Heart right ventricle (tissue), 16 donors: ENCODE measurements at regions of chr5 and their contacts with region 1.

Region 1: GRCh38 chr5:112551419-112552032 is 132.4 kb upstream of the EPB41L4A start:
- DNase-seq: peak in 1 of 2 donors; percentile 64
- ATAC-seq: peak in 7 of 8 donors; percentile 43 to 67 (median 60)
- H3K4me3 ChIP-seq: no peak overlapping the region
- H3K27ac ChIP-seq: no peak overlapping the region
- H3K4me1 ChIP-seq: peaks cover 0 to 32% (median 12%) of the 10 kb centered on the region in 9 donors
- H3K27me3 ChIP-seq: no peaks in the 10 kb centered on the region
- CTCF ChIP-seq: peak; percentile 66 to 89 (median 75)

Region 2: GRCh38 chr5:112594095-112594850 is 42.7 kb after region 1 on chr5:
- intact Hi-C with region 1: no loop called
- DNase-seq: no peak
- ATAC-seq: no peak
- H3K4me3 ChIP-seq: no peak overlapping the region
- H3K27ac ChIP-seq: no peak overlapping the region
- H3K4me1 ChIP-seq: peaks cover 0 to 8% (median 0%) of the 10 kb centered on the region in 9 donors
- H3K27me3 ChIP-seq: no peaks in the 10 kb centered on the region
- CTCF ChIP-seq: no peak

Region 3: DNA sequence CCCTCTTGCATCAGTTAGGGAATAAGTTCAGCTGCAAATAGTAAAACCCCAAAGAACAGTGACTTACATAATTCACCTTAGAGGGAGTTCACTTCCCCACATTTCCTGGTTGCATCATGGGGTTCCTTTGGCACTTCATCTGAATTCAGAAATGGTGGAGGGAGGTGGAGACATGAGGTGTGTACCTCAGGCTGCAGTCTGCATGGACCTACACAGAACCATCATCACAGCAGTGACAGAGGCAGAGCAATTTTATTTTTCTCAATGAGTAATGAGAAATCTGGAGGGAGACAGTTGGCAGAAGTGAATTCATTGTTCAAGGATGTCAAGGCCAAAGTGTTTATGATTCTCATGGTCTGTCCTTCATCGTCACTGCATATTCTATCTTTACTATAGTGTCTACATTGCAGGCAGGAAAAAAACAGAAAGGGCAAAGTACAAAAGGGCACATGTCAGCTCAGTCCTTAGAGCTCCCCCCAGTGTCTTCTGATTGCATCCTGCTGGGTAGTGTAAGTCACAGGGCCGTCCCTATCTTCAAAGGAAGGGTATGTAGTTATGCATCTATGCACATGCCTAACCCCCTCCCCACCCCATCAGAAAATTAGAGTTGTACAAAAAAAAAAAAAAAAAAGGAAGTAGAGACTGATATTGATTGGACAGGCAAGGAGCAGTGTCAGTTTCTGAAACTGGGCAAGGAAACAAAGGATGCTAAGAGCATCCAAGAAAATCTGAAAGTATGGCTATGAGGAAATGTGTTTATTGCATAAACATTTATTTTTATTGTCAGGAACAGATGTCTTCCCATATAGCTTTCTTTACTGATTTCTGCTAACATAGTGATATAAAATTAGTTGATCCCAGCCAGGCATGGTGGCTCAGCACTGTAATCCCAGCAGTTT is 53.5 kb after region 1 on chr5:
- intact Hi-C with region 1: loop called in 1 of 10 experiments (anchors 5 kb)
- DNase-seq: no peak
- ATAC-seq: peak in 4 of 8 donors; percentile 42 to 55 (median 48)
- H3K4me3 ChIP-seq: no peak overlapping the region
- H3K27ac ChIP-seq: no peak overlapping the region
- H3K4me1 ChIP-seq: no peaks in the 10 kb centered on the region
- H3K27me3 ChIP-seq: no peaks in the 10 kb centered on the region
- CTCF ChIP-seq: peak in 7 of 9 donors; percentile 18 to 53 (median 37)

Region 4: GRCh38 chr5:112684737-112685136 is 133.2 kb after region 1 on chr5:
- intact Hi-C with region 1: loop called in 1 of 10 experiments (anchors 10 kb)
- DNase-seq: peak; percentile 11 to 50
- ATAC-seq: peak; percentile 69 to 95 (median 93)
- H3K4me3 ChIP-seq: no peak overlapping the region
- H3K27ac ChIP-seq: peak overlapping the region in 9 of 10 donors; percentile 5 to 83 (median 71)
- H3K4me1 ChIP-seq: peaks cover 0 to 38% (median 20%) of the 10 kb centered on the region in 9 donors
- H3K27me3 ChIP-seq: peaks cover 0 to 4% (median 0%) of the 10 kb centered on the region in 7 donors
- CTCF ChIP-seq: no peak

Region 5: DNA sequence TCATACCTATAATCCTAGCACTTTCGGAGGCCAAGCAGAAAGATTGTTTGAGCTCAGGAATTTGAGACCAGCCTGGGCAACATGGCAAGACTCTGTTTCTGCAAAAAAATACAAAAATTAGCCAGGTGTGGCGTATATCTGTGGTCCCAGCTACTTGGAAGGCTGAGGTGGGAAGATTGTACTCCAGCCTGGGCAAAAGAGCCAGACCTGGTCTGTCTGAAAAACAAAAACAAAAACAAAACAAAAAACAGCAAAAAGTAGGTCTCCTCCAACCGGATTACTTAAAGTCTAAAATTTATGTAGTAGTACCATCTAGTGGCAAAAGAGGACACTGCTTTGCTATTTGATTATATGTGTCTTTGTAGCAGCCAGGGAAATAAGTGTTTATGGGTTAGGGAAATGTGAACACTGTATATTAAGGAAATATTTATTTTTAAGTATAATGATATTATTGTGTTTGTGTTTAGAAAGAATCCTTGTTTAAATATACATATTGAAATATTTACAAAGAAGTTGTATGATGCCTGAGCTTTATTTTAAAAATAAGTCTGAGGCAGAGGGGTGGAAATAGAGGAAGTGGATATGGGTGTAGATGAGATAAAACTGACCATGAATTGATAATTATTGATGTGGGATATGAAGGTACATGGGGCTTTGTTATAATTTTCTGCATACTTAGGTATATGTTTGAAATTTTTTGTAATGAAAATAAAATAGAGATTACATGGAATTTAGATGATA is 206.1 kb after region 1 on chr5:
- intact Hi-C with region 1: loop called (anchors 1 to 5 kb)
- DNase-seq: no peak
- ATAC-seq: peak in 7 of 8 donors; percentile 69 to 86 (median 78)
- H3K4me3 ChIP-seq: no peak overlapping the region
- H3K27ac ChIP-seq: peak overlapping the region in 1 of 10 donors; percentile 58
- H3K4me1 ChIP-seq: peaks cover 0 to 14% (median 6%) of the 10 kb centered on the region in 9 donors
- H3K27me3 ChIP-seq: no peaks in the 10 kb centered on the region
- CTCF ChIP-seq: peak; percentile 70 to 90 (median 80)

Region 6: DNA sequence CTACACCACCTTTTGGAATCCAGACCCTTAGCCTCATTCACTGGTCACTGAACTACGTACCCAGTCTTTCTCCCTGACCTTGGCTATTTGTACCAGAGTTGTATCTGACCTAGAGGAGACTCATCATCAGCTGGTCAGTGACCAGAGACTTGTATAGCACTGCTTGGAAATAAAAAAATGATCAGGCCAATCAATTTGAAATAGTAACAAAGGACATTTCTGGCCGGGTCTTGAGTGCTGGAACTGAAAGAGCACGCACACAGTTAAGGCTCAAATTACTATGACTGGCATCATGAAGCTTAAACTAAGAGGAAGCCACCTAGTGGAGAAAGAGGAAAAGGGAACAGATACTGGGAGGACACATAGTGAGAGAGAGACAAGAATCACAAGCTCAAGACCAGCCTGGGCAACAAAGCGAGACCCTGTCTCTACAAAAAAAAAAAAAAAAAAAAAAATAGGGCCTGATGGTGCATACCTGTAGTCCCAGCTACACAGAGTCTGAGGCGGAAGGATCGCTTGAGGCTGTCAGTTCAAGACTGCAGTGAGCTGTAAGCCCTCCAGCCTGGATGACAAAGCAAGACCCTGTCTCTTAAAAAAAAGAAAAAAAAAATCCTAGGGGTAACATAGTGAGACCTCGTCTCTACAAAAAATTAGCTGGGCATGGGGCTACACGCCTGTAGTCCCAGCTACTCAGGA is 296.7 kb after region 1 on chr5:
- intact Hi-C with region 1: loop called in 4 of 10 experiments (anchors 5 to 10 kb)
- DNase-seq: peak in 1 of 2 donors; percentile 8
- ATAC-seq: peak; percentile 80 to 92 (median 88)
- H3K4me3 ChIP-seq: no peak overlapping the region
- H3K27ac ChIP-seq: peak overlapping the region in 1 of 10 donors; percentile 3
- H3K4me1 ChIP-seq: peaks cover 0 to 7% (median 0%) of the 10 kb centered on the region in 9 donors
- H3K27me3 ChIP-seq: peaks cover 0 to 4% (median 0%) of the 10 kb centered on the region in 7 donors
- CTCF ChIP-seq: peak; percentile 22 to 73 (median 64)

Region 7: DNA sequence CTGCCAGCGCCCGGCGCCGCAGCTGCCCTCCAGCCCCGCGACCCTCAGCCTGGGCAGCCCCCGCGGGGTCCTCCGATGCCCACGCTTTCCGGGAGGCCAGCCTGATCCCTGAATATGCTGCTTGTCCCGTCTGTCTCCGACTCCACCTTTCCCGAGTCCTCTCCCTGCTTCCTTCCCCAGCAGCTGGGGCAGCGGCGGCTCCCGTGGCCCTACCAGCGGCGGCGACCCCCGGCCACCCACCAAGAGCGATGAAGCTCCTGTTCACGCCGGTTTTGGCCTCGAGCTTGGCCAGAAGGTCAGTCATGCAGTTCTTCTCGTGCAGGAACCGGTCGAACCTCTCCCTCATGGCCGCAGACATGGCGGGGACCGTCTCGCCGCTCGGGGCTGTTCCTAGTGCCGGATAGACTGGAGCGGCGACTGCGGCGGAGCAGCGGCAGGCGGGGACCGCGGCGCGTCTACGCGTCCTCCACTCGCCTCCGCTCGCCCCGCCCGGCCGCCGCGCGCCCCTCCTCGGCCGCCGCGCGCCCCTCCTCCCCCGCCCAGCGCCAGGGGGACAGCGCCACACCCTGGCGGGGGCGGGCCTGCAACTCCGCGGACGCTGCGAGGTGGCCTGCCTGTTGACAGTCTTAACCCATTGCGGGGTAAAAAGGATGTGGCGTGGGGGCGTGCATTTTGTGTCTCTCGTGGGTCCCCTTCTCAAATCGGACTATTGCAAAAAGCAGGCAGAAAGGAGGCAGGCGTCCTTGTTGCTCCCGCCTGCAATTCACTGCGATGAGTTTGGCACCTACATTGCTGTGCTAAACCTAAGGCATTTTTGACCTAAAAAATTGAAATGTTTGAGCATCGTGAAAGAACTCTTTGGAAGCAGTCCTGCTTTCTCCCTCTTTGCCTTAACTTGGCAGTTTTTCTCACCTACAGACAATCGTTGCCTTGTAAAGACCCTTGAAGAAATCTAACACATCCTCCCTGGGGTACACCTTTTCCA is 370.6 kb after region 1 on chr5 and contains the start of gene REEP5:
- intact Hi-C with region 1: loop called in 1 of 10 experiments (anchors 10 kb)
- DNase-seq: peak; percentile 83 to 90
- ATAC-seq: peak; percentile 92 to 98 (median 96)
- H3K4me3 ChIP-seq: peak within 1 kb of the TSS; percentile 71 to 100 (median 94)
- H3K27ac ChIP-seq: peak within 1 kb of the TSS; percentile 87 to 99 (median 98)
- H3K4me1 ChIP-seq: peaks cover 5 to 61% (median 47%) of the 10 kb centered on the region in 9 donors
- H3K27me3 ChIP-seq: no peaks in the 10 kb centered on the region
- CTCF ChIP-seq: peak; percentile 65 to 92 (median 88)
- total RNA-seq, gene REEP5: 118 to 169 (median 134) TPM

Region 8: GRCh38 chr5:112968411-112969106 is 417.0 kb after region 1 on chr5:
- intact Hi-C with region 1: loop called in 1 of 10 experiments (anchors 10 kb)
- DNase-seq: no peak
- ATAC-seq: no peak
- H3K4me3 ChIP-seq: no peak overlapping the region
- H3K27ac ChIP-seq: no peak overlapping the region
- H3K4me1 ChIP-seq: peaks cover 0 to 10% (median 7%) of the 10 kb centered on the region in 9 donors
- H3K27me3 ChIP-seq: no peaks in the 10 kb centered on the region
- CTCF ChIP-seq: no peak